ENCODE measurements at regions of chr14 and their contacts with region 1.

Region 1: DNA sequence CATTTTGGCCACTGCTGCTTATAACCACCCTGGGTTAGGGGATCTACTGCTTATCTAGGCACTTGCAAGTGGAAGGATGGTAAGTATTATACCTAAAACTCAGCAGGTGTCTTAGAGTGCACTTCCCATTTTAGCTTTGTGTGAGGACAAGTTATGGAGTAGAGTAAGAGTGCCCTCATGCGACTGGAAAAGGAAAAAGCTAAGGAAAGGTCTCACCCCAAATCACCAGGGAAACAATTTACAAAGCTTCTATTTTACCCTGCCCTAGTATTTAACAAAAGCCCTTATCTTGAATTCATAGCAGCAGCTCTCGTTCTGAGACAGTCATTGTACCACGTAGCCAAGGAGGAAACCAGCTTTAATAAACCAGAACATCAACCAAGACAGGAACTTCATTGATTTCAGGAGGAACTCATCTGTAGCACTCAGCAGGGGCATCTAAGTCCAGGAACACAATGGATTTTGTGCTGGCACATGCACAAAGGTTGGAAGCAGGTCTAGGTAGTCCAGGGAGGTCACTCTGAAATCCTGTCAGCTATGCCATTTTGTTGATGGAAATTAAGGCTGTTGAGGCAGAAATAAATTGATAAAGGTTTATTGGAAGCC is 2.9 kb downstream of the RDH12 start:
- DNase-seq: peak; percentile 59
- H3K4me3 Mint-ChIP-seq: no peak overlapping the region
- H3K27ac Mint-ChIP-seq: no peak overlapping the region
- H3K4me1 Mint-ChIP-seq: no peaks in the 10 kb centered on the region
- H3K27me3 Mint-ChIP-seq: no peaks in the 10 kb centered on the region

Region 2: DNA sequence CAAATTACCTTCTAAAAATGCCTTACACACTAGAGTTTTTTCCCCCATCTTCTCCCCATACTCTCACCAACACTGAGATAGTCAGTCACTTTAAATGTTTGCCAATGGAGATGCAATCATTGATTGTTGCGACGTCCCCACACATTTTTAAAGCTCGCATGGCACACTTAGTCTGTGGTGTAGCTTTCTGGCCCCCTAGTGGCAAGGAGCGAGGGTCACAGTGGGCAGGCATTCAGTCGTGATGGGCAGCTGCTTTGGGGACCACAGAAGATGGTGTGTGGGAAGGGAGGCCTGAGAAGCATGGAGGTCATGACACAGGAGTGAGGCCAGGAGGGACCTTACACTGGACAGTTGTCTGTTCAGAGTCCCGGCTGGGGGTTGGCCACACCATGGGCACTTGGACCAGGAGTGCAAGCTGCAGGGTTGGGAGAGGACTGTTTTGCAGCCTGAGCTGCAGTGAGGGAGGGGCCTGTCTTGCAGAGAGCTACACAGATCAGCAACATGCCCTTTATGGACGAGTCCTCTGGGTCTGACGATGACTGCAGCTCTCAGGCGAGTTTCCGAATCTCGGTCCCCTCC is 133.2 kb before region 1 on chr14:
- CTCF ChIA-PET with region 1: interaction called, 17 read pairs
- intact Hi-C with region 1: no loop called
- DNase-seq: peak; percentile 84
- H3K4me3 Mint-ChIP-seq: no peak overlapping the region
- H3K27ac Mint-ChIP-seq: no peak overlapping the region
- H3K4me1 Mint-ChIP-seq: no peaks in the 10 kb centered on the region
- H3K27me3 Mint-ChIP-seq: no peaks in the 10 kb centered on the region

Region 3: GRCh38 chr14:67599698-67600561 is 104.7 kb before region 1 on chr14 and contains the start of gene PIGH:
- CTCF ChIA-PET with region 1: interaction called, 28 read pairs
- intact Hi-C with region 1: no loop called
- DNase-seq: peak; percentile 95
- H3K4me3 Mint-ChIP-seq: peak within 1 kb of the TSS; percentile 84
- H3K27ac Mint-ChIP-seq: peak within 1 kb of the TSS; percentile 93
- H3K4me1 Mint-ChIP-seq: peaks cover 38% of the 10 kb centered on the region
- H3K27me3 Mint-ChIP-seq: no peaks in the 10 kb centered on the region
- total RNA-seq, gene PIGH: 11.9 to 12.4 TPM

Region 4: DNA sequence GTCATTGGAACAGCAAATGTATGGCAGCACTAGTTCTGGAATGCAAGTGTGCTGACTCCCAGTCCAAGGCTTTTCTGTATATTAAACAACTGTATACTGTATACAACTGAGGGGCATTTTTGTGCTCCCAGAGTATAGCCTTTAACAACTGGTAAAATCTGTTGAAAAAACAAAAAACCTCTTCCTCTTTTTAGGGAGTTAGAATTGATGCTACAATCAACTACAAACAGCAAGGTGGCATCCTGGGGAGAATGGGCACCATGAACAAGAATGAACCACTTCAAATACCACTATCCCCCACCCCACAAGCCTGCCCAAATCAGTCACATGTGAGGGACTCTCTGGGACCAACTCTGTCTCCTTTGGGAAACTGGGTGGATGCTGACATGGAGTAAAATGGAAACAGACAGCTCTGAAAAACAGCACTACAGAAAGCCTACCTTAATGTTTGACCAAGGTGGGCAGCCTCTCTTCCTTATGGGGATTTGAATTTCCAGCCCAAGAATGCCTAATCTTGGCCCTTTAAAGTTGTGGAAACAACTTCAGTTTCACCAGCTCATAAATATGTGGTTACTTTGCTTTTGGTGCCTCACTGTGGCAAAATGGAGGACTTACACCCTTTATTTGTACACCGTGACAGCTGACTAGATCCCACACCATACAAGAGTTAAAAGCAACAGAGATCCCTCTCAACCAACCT is 37.7 kb before region 1 on chr14:
- CTCF ChIA-PET with region 1: interaction called, 22 read pairs
- intact Hi-C with region 1: loop called (anchors 1 kb)
- DNase-seq: peak; percentile 55
- H3K4me3 Mint-ChIP-seq: no peak overlapping the region
- H3K27ac Mint-ChIP-seq: no peak overlapping the region
- H3K4me1 Mint-ChIP-seq: peaks cover 50% of the 10 kb centered on the region
- H3K27me3 Mint-ChIP-seq: no peaks in the 10 kb centered on the region

Region 5: GRCh38 chr14:67798731-67799130 is 94.1 kb after region 1 on chr14:
- CTCF ChIA-PET with region 1: no interaction called
- intact Hi-C with region 1: no loop called
- DNase-seq: no peak
- H3K4me3 Mint-ChIP-seq: no peak overlapping the region
- H3K27ac Mint-ChIP-seq: no peak overlapping the region
- H3K4me1 Mint-ChIP-seq: no peaks in the 10 kb centered on the region
- H3K27me3 Mint-ChIP-seq: no peaks in the 10 kb centered on the region

Region 6: DNA sequence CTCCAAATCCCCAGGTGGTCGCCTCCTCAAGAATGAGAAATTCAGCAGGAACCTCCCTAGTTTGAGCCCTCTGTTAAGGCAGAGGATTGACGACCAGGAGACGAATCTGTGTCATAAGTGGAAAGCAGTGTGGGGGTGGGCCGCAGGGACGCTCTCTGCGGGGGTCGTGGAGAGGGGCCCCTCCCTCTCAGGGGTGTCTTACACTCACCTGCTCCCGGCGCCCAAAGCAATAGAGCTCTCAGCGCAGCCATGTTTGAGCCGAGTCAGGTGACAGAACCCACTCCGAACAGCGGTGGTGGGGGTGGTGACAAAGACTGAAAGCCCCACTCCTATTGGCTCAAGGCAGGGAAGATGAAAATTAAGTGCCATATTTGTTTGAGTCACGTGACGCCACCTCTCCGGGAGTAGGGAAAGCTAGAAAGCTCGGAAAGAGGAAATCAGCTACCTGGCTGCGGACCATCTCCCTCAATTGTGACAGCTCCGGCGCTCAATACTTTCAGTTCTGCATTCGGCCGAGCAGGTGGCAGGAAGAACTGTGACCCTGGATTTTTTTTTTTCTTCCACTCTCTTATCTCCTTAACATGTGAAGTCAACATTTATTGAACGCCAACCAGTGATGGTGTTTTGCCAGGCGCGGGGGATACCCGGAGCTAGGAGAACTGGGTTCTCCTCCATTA is 111.9 kb after region 1 on chr14 and contains the start of gene ZFYVE26:
- CTCF ChIA-PET with region 1: no interaction called
- intact Hi-C with region 1: no loop called
- DNase-seq: peak; percentile 96
- H3K4me3 Mint-ChIP-seq: peak within 1 kb of the TSS; percentile 95
- H3K27ac Mint-ChIP-seq: peak within 1 kb of the TSS; percentile 91
- H3K4me1 Mint-ChIP-seq: peaks cover 46% of the 10 kb centered on the region
- H3K27me3 Mint-ChIP-seq: no peaks in the 10 kb centered on the region
- total RNA-seq, gene ZFYVE26: 11.7 to 12.1 TPM